ENCODE measurements at regions of chr3 and their contacts with region 1.

Region 1: GRCh38 chr3:123559040-123559861 is 25.6 kb downstream of the HACD2 start:
- DNase-seq: peak; percentile 35
- H3K4me3 ChIP-seq: no peak overlapping the region
- CTCF ChIP-seq: peak; percentile 60

Region 2: DNA sequence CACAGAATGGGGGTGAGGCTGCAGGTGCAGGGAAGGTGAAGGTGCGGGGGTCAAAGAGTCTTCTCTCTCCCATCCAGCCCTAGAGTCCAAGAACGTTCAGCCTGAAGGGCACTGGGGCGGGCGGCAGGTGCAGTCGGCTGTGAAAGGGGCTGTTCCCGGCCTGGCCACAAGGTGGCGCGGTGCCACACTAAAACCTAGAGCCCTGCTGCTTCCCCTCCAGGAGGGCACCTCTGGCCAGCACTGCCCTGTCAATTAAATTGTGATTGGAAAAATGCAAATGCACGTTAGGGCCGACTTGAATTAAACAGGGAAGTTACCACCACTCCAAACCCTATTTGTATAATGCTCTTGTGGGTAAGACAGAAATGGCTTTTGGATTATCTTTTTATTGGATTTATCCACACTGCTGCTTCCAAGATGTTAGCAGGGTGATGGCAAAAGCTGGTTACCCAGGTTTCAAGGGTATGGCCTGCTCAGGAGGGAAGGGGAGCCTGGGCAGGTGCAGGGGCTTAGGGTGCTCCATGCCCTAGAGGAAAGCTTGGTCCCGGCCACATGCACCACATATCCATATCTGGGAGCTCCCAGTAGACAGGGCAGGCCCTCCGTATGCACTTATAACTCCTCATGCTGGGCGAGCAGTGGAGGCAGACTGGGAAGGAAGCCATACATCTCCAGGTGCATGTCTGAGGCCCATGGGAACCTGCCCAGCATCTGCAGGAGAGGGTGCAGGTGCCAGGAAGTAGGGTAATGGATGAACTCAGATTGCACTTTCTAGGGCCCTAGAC is 230.2 kb before region 1 on chr3:
- in situ Hi-C with region 1: loop called (anchors 25 kb)
- DNase-seq: peak; percentile 1
- H3K4me3 ChIP-seq: no peak overlapping the region
- CTCF ChIP-seq: peak; percentile 93

Region 3: GRCh38 chr3:123816673-123817207 is 257.5 kb after region 1 on chr3:
- in situ Hi-C with region 1: no loop called
- DNase-seq: peak; percentile 50
- H3K4me3 ChIP-seq: no peak overlapping the region
- CTCF ChIP-seq: no peak

Measured in astrocyte of the cerebellum (primary cell).